CD4-positive, alpha-beta T cell (primary cell): ENCODE measurements at regions of chr7 and their contacts with region 1.

Region 1: DNA sequence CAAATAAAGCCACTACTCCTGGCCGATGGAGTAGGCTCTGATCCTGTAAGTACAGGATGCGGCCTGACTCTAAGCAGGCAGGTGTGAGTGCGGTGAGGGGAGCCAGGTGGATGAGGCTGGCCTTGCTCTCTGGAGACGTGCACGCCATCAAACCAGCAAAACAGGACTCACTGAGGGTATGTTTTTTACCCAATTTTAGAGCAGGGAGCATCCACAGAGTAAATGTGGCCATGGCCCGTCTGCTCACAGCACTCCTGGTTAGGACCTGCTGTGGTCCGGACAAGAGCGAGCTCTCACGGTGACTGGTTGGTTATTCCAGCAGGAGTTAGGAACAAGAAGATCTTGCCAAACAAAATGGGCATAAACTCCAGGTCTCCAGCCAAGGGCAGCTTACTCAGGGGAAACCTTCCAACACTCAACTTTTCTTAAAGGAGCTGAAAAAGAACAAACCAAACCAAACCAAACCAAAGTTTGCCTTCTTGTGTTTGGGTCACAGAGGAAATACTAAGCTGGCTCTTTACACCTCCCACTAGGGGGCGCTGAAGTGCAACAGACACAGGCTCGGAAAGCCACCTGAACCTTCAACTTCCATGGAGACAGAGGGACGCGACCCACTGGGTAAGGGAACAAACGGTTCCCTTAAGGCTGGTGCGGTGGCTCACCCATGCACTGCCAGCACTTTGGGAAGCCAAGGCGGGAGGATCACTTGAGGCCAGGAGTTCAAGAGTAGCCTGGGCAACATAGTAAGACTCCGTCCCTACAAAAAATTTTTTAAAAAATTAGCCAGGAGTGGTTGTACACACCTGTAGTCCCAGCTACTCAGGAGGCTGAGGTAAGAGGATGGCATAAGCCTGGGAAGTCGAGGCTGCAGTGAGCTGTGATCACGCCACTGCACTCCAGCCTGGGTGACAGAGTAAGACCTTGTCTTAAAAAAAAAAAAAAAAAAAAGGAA is 122.4 kb downstream of the CLEC2L start:
- DNase-seq: peak; percentile 72 to 95 (median 81)
- ATAC-seq: peak; percentile 57
- H3K4me3 ChIP-seq: no peak overlapping the region
- H3K4me3 Mint-ChIP-seq: peak overlapping the region; percentile 32
- H3K27ac ChIP-seq: no peak overlapping the region
- H3K27ac Mint-ChIP-seq: peak overlapping the region; percentile 81
- H3K4me1 ChIP-seq: peaks cover 64% of the 10 kb centered on the region
- H3K4me1 Mint-ChIP-seq: peaks cover 84% of the 10 kb centered on the region
- H3K27me3 ChIP-seq: no peaks in the 10 kb centered on the region
- H3K27me3 Mint-ChIP-seq: no peaks in the 10 kb centered on the region
- CTCF ChIP-seq: peak; percentile 93

Region 2: GRCh38 chr7:139602143-139602722 is 43.6 kb before region 1 on chr7:
- CTCF ChIA-PET with region 1: no interaction called
- POLR2A ChIA-PET with region 1: interaction called, 3 read pairs
- intact Hi-C with region 1: loop called in 1 of 2 experiments (anchors 1 kb)
- DNase-seq: peak in 3 of 14 experiments; percentile 40 to 53 (median 51)
- ATAC-seq: peak; percentile 78
- H3K4me3 ChIP-seq: no peak overlapping the region
- H3K4me3 Mint-ChIP-seq: no peak overlapping the region
- H3K27ac ChIP-seq: no peak overlapping the region
- H3K27ac Mint-ChIP-seq: no peak overlapping the region
- H3K4me1 ChIP-seq: no peaks in the 10 kb centered on the region
- H3K4me1 Mint-ChIP-seq: no peaks in the 10 kb centered on the region
- H3K27me3 ChIP-seq: no peaks in the 10 kb centered on the region
- H3K27me3 Mint-ChIP-seq: no peaks in the 10 kb centered on the region
- CTCF ChIP-seq: peak; percentile 70

Region 3: GRCh38 chr7:139626817-139627216 is 19.0 kb before region 1 on chr7:
- CTCF ChIA-PET with region 1: interaction called, 5 read pairs
- POLR2A ChIA-PET with region 1: interaction called, 4 read pairs
- intact Hi-C with region 1: loop called in 1 of 2 experiments (anchors 2 kb)
- DNase-seq: peak in 9 of 14 experiments; percentile 16 to 72 (median 29)
- ATAC-seq: peak; percentile 82
- H3K4me3 ChIP-seq: peak overlapping the region; percentile 4
- H3K4me3 Mint-ChIP-seq: peak overlapping the region; percentile 65
- H3K27ac ChIP-seq: peak overlapping the region; percentile 13 to 68
- H3K27ac Mint-ChIP-seq: peak overlapping the region; percentile 90
- H3K4me1 ChIP-seq: peaks cover 61% of the 10 kb centered on the region
- H3K4me1 Mint-ChIP-seq: peaks cover 73% of the 10 kb centered on the region
- H3K27me3 ChIP-seq: no peaks in the 10 kb centered on the region
- H3K27me3 Mint-ChIP-seq: no peaks in the 10 kb centered on the region
- CTCF ChIP-seq: no peak

Region 4: GRCh38 chr7:139725077-139725476 is 79.2 kb after region 1 on chr7:
- CTCF ChIA-PET with region 1: no interaction called
- POLR2A ChIA-PET with region 1: no interaction called
- intact Hi-C with region 1: loop called (anchors 5 kb)
- DNase-seq: no peak
- ATAC-seq: no peak
- H3K4me3 ChIP-seq: no peak overlapping the region
- H3K4me3 Mint-ChIP-seq: no peak overlapping the region
- H3K27ac ChIP-seq: no peak overlapping the region
- H3K27ac Mint-ChIP-seq: no peak overlapping the region
- H3K4me1 ChIP-seq: peaks cover 32% of the 10 kb centered on the region
- H3K4me1 Mint-ChIP-seq: peaks cover 50% of the 10 kb centered on the region
- H3K27me3 ChIP-seq: no peaks in the 10 kb centered on the region
- H3K27me3 Mint-ChIP-seq: no peaks in the 10 kb centered on the region
- CTCF ChIP-seq: no peak

Region 5: GRCh38 chr7:139767561-139767982 is 121.7 kb after region 1 on chr7:
- CTCF ChIA-PET with region 1: interaction called, 5 read pairs
- POLR2A ChIA-PET with region 1: interaction called, 9 read pairs
- intact Hi-C with region 1: loop called (anchors 2 to 5 kb)
- DNase-seq: peak in 4 of 14 experiments; percentile 18 to 79 (median 60)
- ATAC-seq: peak; percentile 76
- H3K4me3 ChIP-seq: no peak overlapping the region
- H3K4me3 Mint-ChIP-seq: peak overlapping the region; percentile 21
- H3K27ac ChIP-seq: peak overlapping the region; percentile 75 to 84
- H3K27ac Mint-ChIP-seq: peak overlapping the region; percentile 86
- H3K4me1 ChIP-seq: peaks cover 60% of the 10 kb centered on the region
- H3K4me1 Mint-ChIP-seq: peaks cover 94% of the 10 kb centered on the region
- H3K27me3 ChIP-seq: no peaks in the 10 kb centered on the region
- H3K27me3 Mint-ChIP-seq: no peaks in the 10 kb centered on the region
- CTCF ChIP-seq: no peak

Region 6: GRCh38 chr7:139982927-139983920 is 337.4 kb after region 1 on chr7:
- CTCF ChIA-PET with region 1: interaction called, 3 read pairs
- POLR2A ChIA-PET with region 1: no interaction called
- intact Hi-C with region 1: loop called in 1 of 2 experiments (anchors 5 kb)
- DNase-seq: no peak
- ATAC-seq: no peak
- H3K4me3 ChIP-seq: no peak overlapping the region
- H3K4me3 Mint-ChIP-seq: peak overlapping the region; percentile 3
- H3K27ac ChIP-seq: no peak overlapping the region
- H3K27ac Mint-ChIP-seq: no peak overlapping the region
- H3K4me1 ChIP-seq: peaks cover 18% of the 10 kb centered on the region
- H3K4me1 Mint-ChIP-seq: peaks cover 26% of the 10 kb centered on the region
- H3K27me3 ChIP-seq: no peaks in the 10 kb centered on the region
- H3K27me3 Mint-ChIP-seq: no peaks in the 10 kb centered on the region
- CTCF ChIP-seq: no peak

Region 7: DNA sequence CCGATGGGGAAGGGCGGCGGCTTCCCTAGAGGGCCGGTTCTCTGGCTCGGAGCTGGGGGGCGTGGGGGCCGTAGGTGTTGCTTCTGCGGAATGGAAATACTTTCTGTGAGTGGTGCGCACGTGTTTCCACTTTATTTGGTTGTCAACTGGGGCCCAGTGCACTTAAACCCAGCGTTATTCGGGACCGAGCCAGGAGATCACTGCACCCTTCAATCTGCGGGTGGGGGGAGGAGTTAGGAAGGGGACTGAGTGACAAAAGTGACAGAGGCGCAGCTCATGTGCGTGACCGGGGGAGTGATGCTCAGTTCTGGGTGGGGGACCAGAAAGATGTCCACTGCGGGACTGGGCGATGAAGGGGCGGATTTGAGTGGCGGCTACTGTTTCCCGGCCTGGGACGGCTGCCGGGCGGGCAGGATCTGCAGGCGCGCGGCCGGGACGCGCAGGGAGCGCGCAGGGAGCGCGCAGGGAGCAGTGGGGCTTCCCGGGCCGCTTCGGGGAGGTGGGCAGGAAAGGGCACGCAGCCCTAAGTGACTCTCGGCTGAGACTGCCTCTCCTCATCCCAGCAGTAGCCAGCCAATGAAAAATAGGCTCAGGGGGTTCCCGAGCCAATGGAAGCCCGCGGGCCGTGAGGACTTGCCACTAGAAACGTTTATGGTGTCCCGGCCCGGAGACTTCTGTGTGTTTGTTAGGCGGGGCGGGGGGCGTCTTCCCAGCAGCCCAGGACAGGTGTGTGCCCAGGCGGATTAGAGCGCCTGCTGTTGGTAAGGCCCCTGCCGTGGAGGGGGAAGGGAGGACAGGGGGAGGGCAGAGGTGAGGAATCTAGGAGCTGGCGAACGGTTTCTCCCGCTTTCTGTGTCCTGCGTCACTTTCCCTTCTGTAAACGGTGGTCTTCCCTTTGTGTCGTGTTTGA is 585.3 kb after region 1 on chr7:
- CTCF ChIA-PET with region 1: no interaction called
- POLR2A ChIA-PET with region 1: no interaction called
- intact Hi-C with region 1: loop called (anchors 5 to 10 kb)
- DNase-seq: peak; percentile 23 to 80 (median 54)
- ATAC-seq: peak; percentile 17
- H3K4me3 ChIP-seq: peak overlapping the region; percentile 70
- H3K4me3 Mint-ChIP-seq: peak overlapping the region; percentile 88
- H3K27ac ChIP-seq: peak overlapping the region; percentile 84 to 97
- H3K27ac Mint-ChIP-seq: peak overlapping the region; percentile 99
- H3K4me1 ChIP-seq: peaks cover 44% of the 10 kb centered on the region
- H3K4me1 Mint-ChIP-seq: peaks cover 46% of the 10 kb centered on the region
- H3K27me3 ChIP-seq: no peaks in the 10 kb centered on the region
- H3K27me3 Mint-ChIP-seq: no peaks in the 10 kb centered on the region
- CTCF ChIP-seq: no peak